ENCODE measurements at regions of chr1 and their contacts with region 1.

Region 1: DNA sequence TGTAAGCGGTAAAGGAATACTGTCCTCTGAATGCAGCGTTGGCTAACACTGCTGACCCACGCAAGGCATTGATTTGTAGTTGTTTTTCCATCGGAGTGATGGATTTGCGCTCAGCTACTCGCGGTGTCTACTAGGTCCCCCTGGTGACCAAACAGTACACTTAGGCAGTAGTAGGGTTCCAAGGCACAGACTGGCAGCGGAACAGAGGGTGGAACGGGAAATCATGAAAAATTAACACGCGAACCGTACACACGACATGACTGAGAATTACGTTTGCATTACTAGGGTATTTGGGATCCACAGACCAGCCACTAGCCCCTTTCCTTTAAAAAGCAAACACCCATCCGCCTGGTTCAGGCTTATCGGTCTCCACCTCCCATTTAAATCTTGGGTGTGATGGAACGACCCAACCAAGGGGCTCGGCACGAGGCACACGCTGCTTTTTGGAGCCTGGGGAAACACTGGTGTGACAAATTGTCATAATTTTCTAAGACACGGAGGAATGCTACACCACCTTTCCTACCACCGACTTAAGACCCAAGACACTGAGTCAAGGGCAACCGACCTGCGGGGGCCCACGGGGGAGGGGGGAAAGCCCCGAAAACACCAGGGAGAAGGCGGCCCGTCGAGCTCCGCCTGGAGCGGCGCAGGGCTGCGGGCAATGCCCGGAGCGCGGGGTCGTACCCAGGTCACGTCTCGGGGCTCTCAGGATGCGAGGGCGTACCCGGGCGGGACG is 699 bp downstream of the DIPK1A start:
- DNase-seq: peak; percentile 77
- H3K27ac ChIP-seq: peak overlapping the region; percentile 94
- CTCF ChIP-seq: peak; percentile 76

Region 2: DNA sequence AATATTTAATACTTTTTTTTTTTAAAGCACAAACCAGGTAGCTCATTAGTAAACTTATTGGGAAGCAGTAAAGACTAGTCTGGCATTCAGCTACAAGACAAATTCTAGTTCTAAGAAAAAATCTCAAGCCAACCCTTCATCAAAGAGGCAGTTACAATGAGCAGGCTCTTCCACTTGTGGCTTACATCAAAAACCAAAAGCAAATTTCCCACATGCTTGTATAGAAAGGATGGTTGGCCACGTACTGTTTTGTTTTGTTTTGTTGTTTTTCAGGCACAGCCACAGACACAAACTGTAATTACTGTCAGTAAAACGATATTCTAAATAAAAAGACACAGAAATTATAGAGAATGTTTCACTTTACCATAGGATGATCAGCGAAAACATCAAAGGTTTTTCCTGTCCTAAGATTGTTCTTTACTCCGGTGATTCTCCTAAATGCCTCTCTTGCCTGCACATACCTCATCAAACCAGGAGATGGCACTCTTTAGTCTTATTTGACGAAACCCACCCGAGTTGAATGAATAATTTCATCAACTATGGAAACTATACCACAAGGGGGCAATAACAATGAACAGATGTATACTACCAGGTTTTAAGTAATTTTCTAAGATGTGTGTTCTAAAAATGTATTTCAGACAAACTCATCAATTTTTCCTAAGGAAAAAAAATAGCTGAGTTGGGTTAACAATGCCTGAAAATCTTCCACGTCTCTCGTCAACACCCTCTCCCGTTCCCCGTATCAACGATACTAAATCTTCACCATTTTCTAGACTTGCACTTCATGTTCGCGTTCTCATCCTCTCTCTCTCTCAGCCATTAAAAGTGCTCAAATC is 101.8 kb before region 1 on chr1:
- CTCF ChIA-PET with region 1: interaction called, 25 read pairs
- POLR2A ChIA-PET with region 1: no interaction called
- DNase-seq: peak; percentile 84
- H3K27ac ChIP-seq: no peak overlapping the region
- CTCF ChIP-seq: peak; percentile 92

Region 3: GRCh38 chr1:92994105-92994712 is 33.6 kb after region 1 on chr1:
- CTCF ChIA-PET with region 1: interaction called, 20 read pairs
- POLR2A ChIA-PET with region 1: no interaction called
- DNase-seq: peak; percentile 60
- H3K27ac ChIP-seq: no peak overlapping the region
- CTCF ChIP-seq: peak; percentile 83

Measured in RWPE1 (cell line).